ENCODE measurements at regions of chr14 and their contacts with region 1.

Region 1: GRCh38 chr14:69107407-69108003 is 45.4 kb downstream of the DCAF5 start:
- DNase-seq: peak; percentile 53
- H3K4me3 ChIP-seq: no peak overlapping the region
- H3K27ac ChIP-seq: no peak overlapping the region
- H3K4me1 ChIP-seq: no peaks in the 10 kb centered on the region
- H3K27me3 ChIP-seq: no peaks in the 10 kb centered on the region
- CTCF ChIP-seq: peak; percentile 48

Region 2: DNA sequence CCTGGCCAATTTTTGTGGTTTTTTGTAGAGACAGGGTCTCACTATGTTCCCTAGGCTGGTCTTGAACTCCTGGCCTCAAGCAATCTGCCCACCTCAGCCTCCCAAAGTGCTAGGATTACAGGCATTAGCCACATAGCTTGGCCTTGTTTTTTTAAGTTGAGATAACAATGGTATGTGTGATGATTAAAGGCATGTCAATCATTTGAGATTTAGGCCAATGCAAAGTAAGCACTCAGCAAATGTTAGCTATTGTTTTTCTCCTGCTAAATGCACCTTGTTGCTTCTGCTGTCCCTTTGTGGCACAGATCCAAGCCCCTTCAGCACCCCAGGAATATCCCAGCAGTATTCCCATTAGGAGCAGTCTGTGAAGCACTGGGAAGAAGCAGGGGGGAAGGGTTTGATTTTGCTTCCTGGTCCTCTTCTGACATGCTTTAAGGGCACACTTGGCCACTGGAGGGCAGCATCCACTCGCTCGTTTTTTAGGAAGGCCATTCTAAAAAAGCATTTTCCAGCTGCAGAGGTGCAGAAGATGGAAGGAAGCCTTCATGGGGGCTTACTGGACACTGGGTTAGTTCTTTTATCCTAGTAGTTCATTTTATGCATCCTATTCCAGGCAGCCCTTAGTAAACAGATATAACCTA is 244.4 kb before region 1 on chr14:
- intact Hi-C with region 1: loop called (anchors 5 kb)
- DNase-seq: peak; percentile 85
- H3K4me3 ChIP-seq: no peak overlapping the region
- H3K27ac ChIP-seq: no peak overlapping the region
- H3K4me1 ChIP-seq: no peaks in the 10 kb centered on the region
- H3K27me3 ChIP-seq: no peaks in the 10 kb centered on the region
- CTCF ChIP-seq: peak; percentile 59

Region 3: DNA sequence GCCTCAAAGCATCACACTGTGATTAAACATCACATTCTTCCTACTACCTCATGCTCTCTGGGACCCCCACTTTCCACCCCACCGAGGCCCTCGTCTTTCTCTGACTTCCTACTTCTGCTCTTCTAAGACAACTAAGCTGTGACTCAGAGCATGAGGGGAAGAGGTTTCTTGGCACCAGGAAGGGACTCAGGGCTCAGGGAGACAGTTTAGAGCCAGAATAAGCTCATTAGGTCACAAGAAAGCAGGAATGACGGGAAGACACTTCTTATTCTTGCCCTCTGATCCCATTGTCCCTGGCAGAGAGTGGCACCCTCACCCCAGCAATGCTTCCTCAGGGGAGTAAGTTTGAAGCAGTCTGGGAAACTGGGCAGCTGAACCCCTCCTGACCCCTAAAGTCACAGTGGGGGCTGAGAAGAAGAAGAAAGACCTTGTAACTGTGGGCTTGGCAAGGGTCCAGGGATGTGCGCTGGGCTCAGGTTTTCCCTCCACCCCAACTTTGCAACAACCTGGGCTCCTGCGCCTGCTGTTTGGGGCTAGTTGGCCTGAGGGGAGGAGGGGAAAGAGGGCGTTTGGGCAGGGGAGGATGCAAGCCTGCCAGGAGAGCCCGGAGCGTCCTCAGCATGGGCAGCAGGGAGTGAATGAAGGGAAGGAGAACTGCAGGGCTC is 63.8 kb before region 1 on chr14:
- intact Hi-C with region 1: no loop called
- DNase-seq: no peak
- H3K4me3 ChIP-seq: no peak overlapping the region
- H3K27ac ChIP-seq: peak overlapping the region; percentile 66
- H3K4me1 ChIP-seq: peaks cover 10% of the 10 kb centered on the region
- H3K27me3 ChIP-seq: no peaks in the 10 kb centered on the region
- CTCF ChIP-seq: no peak

Region 4: DNA sequence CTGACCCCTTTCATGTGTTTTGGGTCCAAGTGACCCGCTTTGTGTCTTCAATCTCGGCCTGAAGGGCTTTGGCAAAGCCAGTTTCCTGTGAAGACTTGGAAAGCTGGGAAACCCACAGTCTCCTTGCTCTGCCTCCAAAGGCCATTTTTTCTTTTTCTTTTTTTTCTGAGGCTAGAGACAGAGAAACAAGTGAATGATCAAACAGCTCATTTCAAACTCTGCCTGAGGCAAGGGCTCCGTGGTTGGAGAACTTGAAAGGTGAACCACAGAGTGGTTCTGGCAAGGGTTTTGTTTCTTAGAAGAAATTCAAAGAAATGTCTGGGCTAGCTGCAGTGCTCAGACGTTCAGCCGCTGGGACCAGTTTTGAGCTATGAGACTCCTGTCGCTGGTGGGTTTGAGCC is 227.9 kb after region 1 on chr14:
- intact Hi-C with region 1: no loop called
- DNase-seq: no peak
- H3K4me3 ChIP-seq: no peak overlapping the region
- H3K27ac ChIP-seq: no peak overlapping the region
- H3K4me1 ChIP-seq: no peaks in the 10 kb centered on the region
- H3K27me3 ChIP-seq: no peaks in the 10 kb centered on the region
- CTCF ChIP-seq: no peak